ENCODE measurements at regions of chr13 and their contacts with region 1.

Region 1: DNA sequence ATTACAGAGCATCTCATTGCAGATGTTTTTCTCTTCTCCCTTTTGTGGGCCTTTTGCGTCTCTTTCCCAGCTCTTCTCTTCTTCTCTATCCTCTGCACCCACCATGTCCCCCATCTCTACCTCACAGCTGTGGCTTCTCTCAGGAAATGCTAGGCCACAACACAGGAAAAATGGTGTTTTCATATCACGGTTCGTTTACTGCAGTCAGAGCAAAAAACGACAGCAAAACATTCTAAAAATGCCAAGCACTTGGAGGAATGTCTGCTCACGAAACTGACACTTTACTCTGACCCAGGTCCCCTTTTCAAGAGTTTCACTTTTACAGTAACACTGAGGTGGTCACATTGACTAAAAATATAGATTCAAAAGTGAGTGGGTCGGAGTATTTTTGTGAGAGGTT is 152.2 kb downstream of the DCT start:
- DNase-seq: no peak
- ATAC-seq: peak; percentile 53
- H3K4me3 Mint-ChIP-seq: no peak overlapping the region
- H3K27ac Mint-ChIP-seq: peak overlapping the region; percentile 37
- H3K4me1 Mint-ChIP-seq: peaks cover 64% of the 10 kb centered on the region
- H3K27me3 Mint-ChIP-seq: peaks cover 10% of the 10 kb centered on the region

Region 2: DNA sequence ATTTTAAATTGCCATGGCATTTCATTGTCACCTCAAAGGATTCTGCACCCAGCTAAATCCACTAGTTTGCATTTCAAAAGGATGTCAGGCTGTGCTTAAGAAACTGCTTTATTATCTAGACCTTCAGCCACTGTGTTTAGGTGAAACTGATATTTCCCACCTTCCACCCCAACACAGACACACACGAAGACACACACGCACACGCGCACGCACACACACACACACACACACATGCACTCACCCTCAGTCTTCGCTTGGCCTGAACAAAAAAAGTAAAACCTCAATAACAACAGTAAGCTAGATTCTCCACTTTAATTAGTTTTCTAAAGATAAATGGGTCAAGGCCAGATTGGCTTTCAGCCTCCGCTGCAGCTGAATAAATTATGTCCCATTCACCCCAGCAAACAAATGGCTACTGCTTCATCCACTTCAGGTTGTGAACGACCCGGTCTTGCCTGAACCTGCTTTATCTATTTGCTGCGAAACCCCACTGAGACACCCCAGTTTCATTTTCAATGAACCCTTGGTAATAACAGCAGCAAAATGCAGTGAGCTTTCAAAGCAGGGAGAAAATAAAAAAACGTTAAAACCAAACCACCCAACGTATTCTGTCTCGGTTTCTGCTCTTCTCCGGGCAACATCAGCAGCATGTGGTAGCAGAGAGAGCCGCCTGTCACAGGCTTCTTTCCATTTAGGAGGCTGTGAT is 14.7 kb before region 1 on chr13:
- CTCF ChIA-PET with region 1: no interaction called
- POLR2A ChIA-PET with region 1: no interaction called
- intact Hi-C with region 1: no loop called
- DNase-seq: no peak
- ATAC-seq: no peak
- H3K4me3 Mint-ChIP-seq: no peak overlapping the region
- H3K27ac Mint-ChIP-seq: no peak overlapping the region
- H3K4me1 Mint-ChIP-seq: peaks cover 8% of the 10 kb centered on the region
- H3K27me3 Mint-ChIP-seq: no peaks in the 10 kb centered on the region

Region 3: DNA sequence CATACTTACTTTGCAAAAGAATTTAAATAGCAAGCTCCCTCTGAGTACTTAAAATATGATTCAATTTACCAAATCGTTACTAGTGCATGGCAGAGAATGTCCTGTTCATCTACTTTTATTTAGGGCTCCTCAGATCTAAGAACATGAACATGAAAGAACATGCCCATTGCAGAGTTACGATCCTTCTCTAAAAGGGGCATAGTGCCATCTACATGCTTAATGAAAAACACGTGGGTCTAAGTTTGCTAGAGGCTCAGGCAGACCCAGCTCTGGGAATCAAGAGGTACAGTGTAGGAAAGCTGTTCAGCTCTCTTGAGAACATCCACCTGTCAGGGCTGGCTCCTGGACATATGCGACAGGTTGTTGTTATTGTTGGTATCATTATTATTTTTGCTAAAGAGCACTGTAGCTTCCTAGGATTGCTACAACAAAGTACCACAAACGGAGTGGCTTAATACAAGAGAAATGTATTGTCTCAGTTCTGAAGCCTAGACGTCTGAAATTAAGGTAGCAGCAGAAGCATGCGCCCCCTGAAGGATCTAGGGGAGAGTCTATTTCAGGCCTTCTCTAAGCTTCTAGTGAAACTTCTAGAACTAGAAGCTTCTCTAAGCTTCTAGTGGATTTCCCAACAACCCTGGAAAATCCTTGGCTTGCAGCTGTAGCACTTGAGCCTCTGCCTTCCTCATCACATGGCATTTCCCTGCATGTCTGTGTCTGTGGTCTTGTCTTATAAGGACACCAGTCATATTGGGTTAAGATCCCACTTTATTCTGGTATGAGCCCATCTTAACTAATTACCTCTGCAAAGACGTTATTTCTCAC is 18.3 kb after region 1 on chr13:
- CTCF ChIA-PET with region 1: interaction called, 3 read pairs
- POLR2A ChIA-PET with region 1: no interaction called
- intact Hi-C with region 1: loop called in 1 of 2 experiments (anchors 1 kb)
- DNase-seq: no peak
- ATAC-seq: no peak
- H3K4me3 Mint-ChIP-seq: no peak overlapping the region
- H3K27ac Mint-ChIP-seq: no peak overlapping the region
- H3K4me1 Mint-ChIP-seq: peaks cover 23% of the 10 kb centered on the region
- H3K27me3 Mint-ChIP-seq: peaks cover 5% of the 10 kb centered on the region

Region 4: GRCh38 chr13:94483970-94484369 is 156.7 kb after region 1 on chr13:
- CTCF ChIA-PET with region 1: no interaction called
- POLR2A ChIA-PET with region 1: no interaction called
- intact Hi-C with region 1: no loop called
- DNase-seq: no peak
- ATAC-seq: no peak
- H3K4me3 Mint-ChIP-seq: no peak overlapping the region
- H3K27ac Mint-ChIP-seq: no peak overlapping the region
- H3K4me1 Mint-ChIP-seq: peaks cover 2% of the 10 kb centered on the region
- H3K27me3 Mint-ChIP-seq: peaks cover 3% of the 10 kb centered on the region

Measured in activated CD4-positive, alpha-beta T cell treated with anti-CD3 and anti-CD28 coated beads for 36 hours (primary cell).